ENCODE measurements at regions of chr16 and their contacts with region 1.

Region 1: GRCh38 chr16:252366-253337 is 18.0 kb downstream of the FAM234A start:
- DNase-seq: peak; percentile 68
- ATAC-seq: peak; percentile 84
- H3K4me3 Mint-ChIP-seq: peak overlapping the region; percentile 56
- H3K27ac Mint-ChIP-seq: peak overlapping the region; percentile 85
- H3K4me1 Mint-ChIP-seq: peaks cover 34% of the 10 kb centered on the region
- H3K27me3 Mint-ChIP-seq: no peaks in the 10 kb centered on the region

Region 2: GRCh38 chr16:9903-10665 is 242.6 kb before region 1 on chr16:
- CTCF ChIA-PET with region 1: no interaction called
- POLR2A ChIA-PET with region 1: no interaction called
- intact Hi-C with region 1: no loop called
- DNase-seq: no peak
- ATAC-seq: peak; percentile 83
- H3K4me3 Mint-ChIP-seq: peak overlapping the region; percentile 19
- H3K27ac Mint-ChIP-seq: no peak overlapping the region
- H3K4me1 Mint-ChIP-seq: no peaks in the 10 kb centered on the region
- H3K27me3 Mint-ChIP-seq: no peaks in the 10 kb centered on the region

Region 3: DNA sequence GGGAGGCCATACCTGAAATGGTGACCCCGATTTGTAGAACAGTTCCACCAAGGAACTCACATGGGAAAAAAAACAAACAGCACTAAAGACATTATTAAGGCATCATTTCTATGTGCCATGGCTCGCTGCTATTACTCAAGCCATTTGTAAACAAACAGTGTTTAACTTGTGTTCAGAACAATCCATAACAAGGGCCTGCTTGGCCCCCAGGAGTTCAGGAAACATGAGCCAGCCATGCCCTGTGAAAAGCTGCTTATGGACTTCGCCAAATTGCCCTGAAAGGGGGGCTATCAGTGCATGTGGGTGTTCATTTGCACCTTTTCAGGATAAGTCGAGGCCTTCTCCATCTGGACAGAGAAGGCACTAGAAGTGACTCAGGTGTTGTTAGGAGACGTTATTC is 207.2 kb before region 1 on chr16:
- CTCF ChIA-PET with region 1: no interaction called
- POLR2A ChIA-PET with region 1: no interaction called
- intact Hi-C with region 1: no loop called
- DNase-seq: no peak
- ATAC-seq: no peak
- H3K4me3 Mint-ChIP-seq: no peak overlapping the region
- H3K27ac Mint-ChIP-seq: no peak overlapping the region
- H3K4me1 Mint-ChIP-seq: peaks cover 15% of the 10 kb centered on the region
- H3K27me3 Mint-ChIP-seq: no peaks in the 10 kb centered on the region

Region 4: GRCh38 chr16:212999-213398 is 39.7 kb before region 1 on chr16:
- CTCF ChIA-PET with region 1: no interaction called
- POLR2A ChIA-PET with region 1: no interaction called
- intact Hi-C with region 1: no loop called
- DNase-seq: no peak
- ATAC-seq: no peak
- H3K4me3 Mint-ChIP-seq: no peak overlapping the region
- H3K27ac Mint-ChIP-seq: no peak overlapping the region
- H3K4me1 Mint-ChIP-seq: no peaks in the 10 kb centered on the region
- H3K27me3 Mint-ChIP-seq: no peaks in the 10 kb centered on the region

Region 5: GRCh38 chr16:228818-229730 is 23.6 kb before region 1 on chr16 and contains the start of gene LUC7L:
- CTCF ChIA-PET with region 1: no interaction called
- POLR2A ChIA-PET with region 1: interaction called, 3 read pairs
- intact Hi-C with region 1: loop called in 1 of 2 experiments (anchors 1 kb)
- DNase-seq: peak; percentile 93
- ATAC-seq: peak; percentile 90
- H3K4me3 Mint-ChIP-seq: peak within 1 kb of the TSS; percentile 92
- H3K27ac Mint-ChIP-seq: peak within 1 kb of the TSS; percentile 85
- H3K4me1 Mint-ChIP-seq: peaks cover 30% of the 10 kb centered on the region
- H3K27me3 Mint-ChIP-seq: no peaks in the 10 kb centered on the region
- total RNA-seq, gene LUC7L: 44.6 to 50.1 TPM

Measured in activated CD4-positive, alpha-beta T cell treated with anti-CD3 and anti-CD28 coated beads for 36 hours (primary cell).